ENCODE measurements at regions of chr20 and their contacts with region 1.

Region 1: DNA sequence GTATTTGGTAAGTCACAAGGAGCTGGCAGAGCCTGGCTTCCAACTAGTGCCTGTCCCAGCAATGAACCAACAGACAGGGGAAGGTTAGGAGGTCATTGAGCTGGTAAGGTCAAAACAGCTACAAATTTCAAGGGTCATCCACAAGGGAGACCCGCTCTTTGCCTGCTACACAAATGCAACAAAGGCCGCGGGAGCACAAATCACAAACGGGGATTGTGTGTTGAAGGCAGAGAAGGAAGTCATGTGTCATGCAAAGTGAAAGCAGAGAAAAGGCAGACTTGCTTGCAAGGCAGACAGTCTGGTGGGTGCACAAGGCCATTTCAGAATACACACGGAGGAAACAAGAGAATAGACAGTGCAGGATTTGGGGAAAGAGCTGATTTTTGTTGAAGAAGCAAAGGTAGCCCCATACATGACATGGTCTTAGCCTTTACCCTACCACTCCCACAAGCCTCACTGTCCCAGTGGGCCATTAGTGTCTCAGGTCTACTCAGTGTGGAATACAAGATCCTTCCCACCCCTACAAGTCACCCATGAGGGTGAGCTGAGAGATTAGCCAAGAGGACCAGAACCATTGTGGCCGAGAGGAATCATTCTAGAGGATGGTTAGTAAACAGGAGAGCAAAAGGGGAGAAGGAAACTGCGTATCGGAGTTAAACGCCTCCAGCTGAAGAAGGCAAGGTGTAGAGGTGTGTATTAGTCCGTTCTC is 18.1 kb upstream of the SAMHD1 start:
- DNase-seq: peak; percentile 67
- H3K4me3 Mint-ChIP-seq: peak overlapping the region; percentile 53
- H3K27ac Mint-ChIP-seq: peak overlapping the region; percentile 86
- H3K4me1 Mint-ChIP-seq: peaks cover 60% of the 10 kb centered on the region
- H3K27me3 Mint-ChIP-seq: no peaks in the 10 kb centered on the region

Region 2: GRCh38 chr20:36936341-36936740 is 33.3 kb before region 1 on chr20:
- CTCF ChIA-PET with region 1: no interaction called
- intact Hi-C with region 1: loop called (anchors 5 kb)
- DNase-seq: no peak
- H3K4me3 Mint-ChIP-seq: no peak overlapping the region
- H3K27ac Mint-ChIP-seq: peak overlapping the region; percentile 74
- H3K4me1 Mint-ChIP-seq: peaks cover 60% of the 10 kb centered on the region
- H3K27me3 Mint-ChIP-seq: no peaks in the 10 kb centered on the region

Region 3: DNA sequence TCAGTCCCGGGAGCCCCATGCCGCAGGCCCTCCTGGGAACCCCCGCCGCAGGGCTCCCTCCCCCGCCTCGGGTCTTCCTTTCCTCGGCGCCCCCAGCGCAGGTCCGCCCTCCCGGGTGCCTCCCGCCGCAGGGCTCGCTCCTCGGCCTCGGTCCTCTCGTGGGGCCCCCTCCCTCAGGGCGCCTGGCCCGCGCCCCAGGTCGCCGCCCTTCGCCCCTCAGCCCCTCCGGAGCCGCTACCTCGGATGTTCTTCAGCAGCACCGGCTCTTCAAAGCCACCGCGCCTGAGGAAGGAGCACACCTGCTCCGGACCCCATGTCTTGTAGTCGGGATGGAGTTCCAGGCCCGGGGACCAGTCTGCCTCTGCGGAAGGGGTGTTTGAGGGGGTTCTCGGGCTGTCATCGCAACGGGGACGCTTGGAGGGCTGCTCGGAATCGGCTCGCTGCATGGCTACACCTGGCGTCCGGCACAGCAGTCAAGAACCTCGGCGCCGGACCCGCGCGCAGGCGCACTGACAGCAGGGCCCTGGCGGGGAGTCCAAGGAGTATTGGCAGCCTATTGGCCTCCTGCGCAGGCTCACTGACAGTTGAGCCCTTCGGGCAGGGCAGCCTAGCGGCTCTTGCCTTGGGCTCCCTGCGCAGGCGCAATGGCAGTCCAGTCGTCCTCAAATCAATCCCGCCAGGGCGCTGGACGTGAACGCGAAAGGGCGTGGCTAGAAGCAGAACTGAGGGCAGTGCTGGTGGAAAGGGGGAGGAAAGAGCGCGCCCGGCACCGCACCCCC is 18.2 kb before region 1 on chr20 and contains the start of gene SAMHD1:
- CTCF ChIA-PET with region 1: interaction called, 4 read pairs
- intact Hi-C with region 1: loop called (anchors 1 kb)
- DNase-seq: peak; percentile 89
- H3K4me3 Mint-ChIP-seq: peak within 1 kb of the TSS; percentile 96
- H3K27ac Mint-ChIP-seq: peak within 1 kb of the TSS; percentile 92
- H3K4me1 Mint-ChIP-seq: peaks cover 39% of the 10 kb centered on the region
- H3K27me3 Mint-ChIP-seq: no peaks in the 10 kb centered on the region
- total RNA-seq, gene SAMHD1: 29.9 to 33.5 TPM

Region 4: GRCh38 chr20:36998652-36999051 is 29.0 kb after region 1 on chr20:
- CTCF ChIA-PET with region 1: no interaction called
- intact Hi-C with region 1: no loop called
- DNase-seq: no peak
- H3K4me3 Mint-ChIP-seq: no peak overlapping the region
- H3K27ac Mint-ChIP-seq: peak overlapping the region; percentile 80
- H3K4me1 Mint-ChIP-seq: peaks cover 14% of the 10 kb centered on the region
- H3K27me3 Mint-ChIP-seq: no peaks in the 10 kb centered on the region

Region 5: GRCh38 chr20:37081717-37082289 is 112.2 kb after region 1 on chr20:
- CTCF ChIA-PET with region 1: no interaction called
- intact Hi-C with region 1: no loop called
- DNase-seq: peak; percentile 28
- H3K4me3 Mint-ChIP-seq: no peak overlapping the region
- H3K27ac Mint-ChIP-seq: no peak overlapping the region
- H3K4me1 Mint-ChIP-seq: peaks cover 32% of the 10 kb centered on the region
- H3K27me3 Mint-ChIP-seq: no peaks in the 10 kb centered on the region

Region 6: DNA sequence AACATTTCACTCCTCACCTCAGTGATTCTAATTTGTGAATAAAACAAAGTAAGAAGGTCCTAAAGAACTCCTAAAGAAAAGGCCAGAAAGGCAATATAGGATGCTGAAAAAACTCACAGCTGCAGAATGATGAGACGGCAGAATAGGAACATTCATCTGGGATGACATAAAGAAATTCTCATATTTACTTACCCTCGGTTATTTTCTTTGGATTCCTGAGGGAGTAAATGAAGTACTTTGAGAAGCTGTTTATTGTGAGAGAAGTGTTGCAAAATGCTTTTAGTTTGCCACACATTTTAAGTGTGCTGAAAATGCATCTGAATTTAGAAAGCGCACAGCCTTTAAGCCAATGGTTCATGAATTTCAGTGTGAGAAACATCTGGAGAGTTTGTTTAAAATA is 161.9 kb after region 1 on chr20:
- CTCF ChIA-PET with region 1: no interaction called
- intact Hi-C with region 1: no loop called
- DNase-seq: no peak
- H3K4me3 Mint-ChIP-seq: no peak overlapping the region
- H3K27ac Mint-ChIP-seq: no peak overlapping the region
- H3K4me1 Mint-ChIP-seq: no peaks in the 10 kb centered on the region
- H3K27me3 Mint-ChIP-seq: no peaks in the 10 kb centered on the region

Region 7: DNA sequence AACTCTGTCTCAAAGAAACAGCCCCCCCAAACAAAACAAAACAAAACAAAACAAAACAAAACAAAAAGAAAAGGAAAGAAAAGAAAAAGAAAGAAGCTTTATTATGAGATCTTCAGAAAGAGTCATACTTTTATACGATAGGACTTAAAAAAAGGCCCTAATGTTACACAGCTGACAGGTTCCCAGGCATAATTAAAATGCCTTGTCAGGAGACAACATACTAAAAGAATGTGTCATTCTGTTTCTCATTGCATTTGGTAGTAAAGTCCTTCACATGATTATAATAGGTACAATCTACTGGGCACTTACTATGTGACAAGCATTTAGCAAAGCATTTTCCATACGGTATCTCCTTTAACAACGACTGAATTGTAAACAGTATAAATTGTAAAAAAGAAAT is 173.1 kb after region 1 on chr20:
- CTCF ChIA-PET with region 1: no interaction called
- intact Hi-C with region 1: no loop called
- DNase-seq: no peak
- H3K4me3 Mint-ChIP-seq: no peak overlapping the region
- H3K27ac Mint-ChIP-seq: no peak overlapping the region
- H3K4me1 Mint-ChIP-seq: no peaks in the 10 kb centered on the region
- H3K27me3 Mint-ChIP-seq: no peaks in the 10 kb centered on the region

Measured in activated naive CD4-positive, alpha-beta T cell treated with anti-CD3 and anti-CD28 coated beads for 36 hours (primary cell).